Caco-2 (cell line): ENCODE measurements at regions of chr15 and their contacts with region 1.

Region 1: GRCh38 chr15:40928821-40929659 is at the start of gene DLL4:
- DNase-seq: peak; percentile 93 to 94
- H3K4me3 ChIP-seq: peak within 1 kb of the TSS; percentile 65
- H3K4me3 Mint-ChIP-seq: peak within 1 kb of the TSS; percentile 84
- H3K27ac Mint-ChIP-seq: peak within 1 kb of the TSS; percentile 88
- H3K4me1 ChIP-seq: peaks cover 34% of the 10 kb centered on the region
- H3K4me1 Mint-ChIP-seq: peaks cover 35% of the 10 kb centered on the region
- H3K27me3 ChIP-seq: no peaks in the 10 kb centered on the region
- H3K27me3 Mint-ChIP-seq: no peaks in the 10 kb centered on the region
- CTCF ChIP-seq: peak in 1 of 2 experiments; percentile 4
- total RNA-seq, gene DLL4: 3.4 TPM in 2 replicates

Region 2: DNA sequence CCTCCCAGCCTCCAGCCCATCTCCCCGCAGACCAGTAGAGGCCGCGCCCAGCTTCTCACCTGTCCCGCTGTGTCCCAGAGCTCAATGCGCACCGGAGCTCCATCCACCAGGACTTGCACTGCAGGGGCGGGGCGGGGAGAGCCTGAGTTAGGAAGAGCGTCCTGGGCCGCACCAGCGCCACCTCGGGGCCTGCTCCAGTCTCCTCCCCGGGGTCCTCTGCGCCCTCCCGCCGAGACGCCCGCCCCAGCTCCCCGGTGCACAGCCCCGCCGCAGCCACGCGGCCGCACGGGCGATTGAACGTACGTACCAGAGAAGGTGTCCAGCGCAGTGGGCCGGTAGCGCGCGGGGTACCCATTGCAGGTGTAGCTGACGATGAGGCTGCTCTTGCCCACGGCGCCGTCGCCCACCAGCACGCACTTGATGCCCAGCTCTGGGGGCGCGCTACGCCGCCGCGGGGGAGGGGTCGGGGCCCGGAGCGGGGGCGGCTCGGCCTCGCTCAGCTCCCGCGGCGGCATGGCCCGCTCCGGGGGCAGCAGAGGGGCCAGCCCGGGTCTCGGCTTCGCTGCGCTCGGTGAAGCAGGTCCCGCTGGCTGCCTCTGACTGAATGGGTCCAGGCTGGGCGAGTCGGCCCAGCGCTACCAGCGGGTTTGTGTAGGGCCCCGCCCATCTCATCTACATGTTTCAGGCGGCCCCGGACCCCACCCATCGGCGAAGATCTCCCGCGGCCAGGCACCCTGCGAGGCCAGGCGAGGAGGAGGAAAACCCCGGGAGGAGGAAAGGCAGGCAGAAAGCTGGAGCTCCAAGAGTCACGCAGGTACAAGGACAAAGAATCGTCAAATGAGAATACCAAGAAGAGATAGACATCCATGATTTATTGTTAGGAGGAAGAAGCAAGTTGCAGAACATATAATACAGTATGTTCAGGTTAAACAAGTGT is 55.1 kb before region 1 on chr15 and contains the start of gene RHOV:
- CTCF ChIA-PET with region 1: interaction called, 12 read pairs
- POLR2A ChIA-PET with region 1: no interaction called
- intact Hi-C with region 1: no loop called
- DNase-seq: peak; percentile 90 to 92
- H3K4me3 ChIP-seq: peak within 1 kb of the TSS; percentile 88
- H3K4me3 Mint-ChIP-seq: peak within 1 kb of the TSS; percentile 68
- H3K27ac Mint-ChIP-seq: peak within 1 kb of the TSS; percentile 64
- H3K4me1 ChIP-seq: peaks cover 15% of the 10 kb centered on the region
- H3K4me1 Mint-ChIP-seq: peaks cover 8% of the 10 kb centered on the region
- H3K27me3 ChIP-seq: no peaks in the 10 kb centered on the region
- H3K27me3 Mint-ChIP-seq: no peaks in the 10 kb centered on the region
- CTCF ChIP-seq: peak in 1 of 2 experiments; percentile 59
- total RNA-seq, gene RHOV: 3.2 and 4.4 TPM in 2 replicates

Region 3: GRCh38 chr15:40914486-40914885 is 14.6 kb before region 1 on chr15:
- CTCF ChIA-PET with region 1: interaction called, 12 read pairs
- POLR2A ChIA-PET with region 1: interaction called, 6 read pairs
- intact Hi-C with region 1: no loop called
- DNase-seq: no peak
- H3K4me3 ChIP-seq: no peak overlapping the region
- H3K4me3 Mint-ChIP-seq: no peak overlapping the region
- H3K27ac Mint-ChIP-seq: no peak overlapping the region
- H3K4me1 ChIP-seq: no peaks in the 10 kb centered on the region
- H3K4me1 Mint-ChIP-seq: peaks cover 5% of the 10 kb centered on the region
- H3K27me3 ChIP-seq: no peaks in the 10 kb centered on the region
- H3K27me3 Mint-ChIP-seq: no peaks in the 10 kb centered on the region
- CTCF ChIP-seq: no peak

Region 4: GRCh38 chr15:40952901-40953712 is 24.1 kb after region 1 on chr15 and contains the start of gene CHAC1:
- CTCF ChIA-PET with region 1: interaction called, 14 read pairs
- POLR2A ChIA-PET with region 1: interaction called, 30 read pairs
- intact Hi-C with region 1: loop called (anchors 1 kb)
- DNase-seq: peak; percentile 97 to 98
- H3K4me3 ChIP-seq: peak within 1 kb of the TSS; percentile 94
- H3K4me3 Mint-ChIP-seq: peak within 1 kb of the TSS; percentile 89
- H3K27ac Mint-ChIP-seq: peak within 1 kb of the TSS; percentile 99
- H3K4me1 ChIP-seq: no peaks in the 10 kb centered on the region
- H3K4me1 Mint-ChIP-seq: peaks cover 15% of the 10 kb centered on the region
- H3K27me3 ChIP-seq: no peaks in the 10 kb centered on the region
- H3K27me3 Mint-ChIP-seq: no peaks in the 10 kb centered on the region
- CTCF ChIP-seq: no peak
- total RNA-seq, gene CHAC1: 54.0 and 55.8 TPM in 2 replicates

Region 5: DNA sequence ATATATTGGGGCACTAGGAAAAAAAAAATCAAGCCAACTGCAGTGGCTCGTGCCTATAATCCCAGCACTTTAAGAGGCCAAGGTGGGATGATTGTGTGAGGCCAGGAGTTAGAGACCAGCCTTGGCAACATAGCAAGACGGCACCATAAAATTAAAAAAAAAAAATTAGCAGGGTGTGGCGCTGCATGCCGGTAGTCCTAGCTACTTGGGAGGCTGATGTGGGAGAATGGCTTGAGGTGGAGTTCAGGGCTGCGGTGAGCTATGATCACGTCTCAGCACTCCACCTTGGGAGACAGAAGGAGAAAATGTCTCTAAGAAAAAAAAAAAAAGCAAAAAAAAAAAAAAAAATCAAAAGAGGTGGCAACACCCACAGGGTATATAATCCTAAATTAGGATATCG is 137.5 kb after region 1 on chr15:
- CTCF ChIA-PET with region 1: no interaction called
- POLR2A ChIA-PET with region 1: no interaction called
- intact Hi-C with region 1: no loop called
- DNase-seq: no peak
- H3K4me3 ChIP-seq: no peak overlapping the region
- H3K4me3 Mint-ChIP-seq: no peak overlapping the region
- H3K27ac Mint-ChIP-seq: no peak overlapping the region
- H3K4me1 ChIP-seq: no peaks in the 10 kb centered on the region
- H3K4me1 Mint-ChIP-seq: no peaks in the 10 kb centered on the region
- H3K27me3 ChIP-seq: no peaks in the 10 kb centered on the region
- H3K27me3 Mint-ChIP-seq: no peaks in the 10 kb centered on the region
- CTCF ChIP-seq: no peak

Region 6: GRCh38 chr15:41258706-41259471 is 329.8 kb after region 1 on chr15:
- CTCF ChIA-PET with region 1: interaction called, 3 read pairs
- POLR2A ChIA-PET with region 1: interaction called, 10 read pairs
- intact Hi-C with region 1: no loop called
- DNase-seq: peak in 1 of 2 experiments; percentile 28
- H3K4me3 ChIP-seq: no peak overlapping the region
- H3K4me3 Mint-ChIP-seq: peak overlapping the region; percentile 1
- H3K27ac Mint-ChIP-seq: peak overlapping the region; percentile 68
- H3K4me1 ChIP-seq: peaks cover 49% of the 10 kb centered on the region
- H3K4me1 Mint-ChIP-seq: peaks cover 21% of the 10 kb centered on the region
- H3K27me3 ChIP-seq: no peaks in the 10 kb centered on the region
- H3K27me3 Mint-ChIP-seq: no peaks in the 10 kb centered on the region
- CTCF ChIP-seq: no peak